ENCODE measurements at regions of chr10 and their contacts with region 1.

Region 1: GRCh38 chr10:101840741-101841453 is 2.7 kb downstream of the KCNIP2 start:
- DNase-seq: peak; percentile 69 to 85 (median 76)
- ATAC-seq: peak; percentile 95
- H3K4me3 ChIP-seq: no peak overlapping the region
- H3K27ac ChIP-seq: no peak overlapping the region
- H3K4me1 ChIP-seq: peaks cover under 1 to 21% of the 10 kb centered on the region in 2 experiments; a peak in 4 of 5 replicates
- H3K27me3 ChIP-seq: no peaks in the 10 kb centered on the region
- CTCF ChIP-seq: peak; percentile 94 to 98 (median 95)
- EP300 ChIP-seq: no peak
- POLR2A ChIP-seq: no peak
- RAD21 ChIP-seq: peak; percentile 89 to 93

Region 2: GRCh38 chr10:101725296-101726115 is 115.4 kb before region 1 on chr10:
- CTCF ChIA-PET with region 1: no interaction called
- POLR2A ChIA-PET with region 1: no interaction called
- in situ Hi-C with region 1: no loop called
- intact Hi-C with region 1: no loop called
- DNase-seq: peak in 1 of 4 experiments; percentile 9
- ATAC-seq: peak; percentile 64
- H3K4me3 ChIP-seq: no peak overlapping the region
- H3K27ac ChIP-seq: no peak overlapping the region
- H3K4me1 ChIP-seq: no peaks in the 10 kb centered on the region; a peak in 3 of 5 replicates
- H3K27me3 ChIP-seq: no peaks in the 10 kb centered on the region
- CTCF ChIP-seq: no peak
- EP300 ChIP-seq: no peak
- POLR2A ChIP-seq: no peak
- RAD21 ChIP-seq: no peak

Region 3: DNA sequence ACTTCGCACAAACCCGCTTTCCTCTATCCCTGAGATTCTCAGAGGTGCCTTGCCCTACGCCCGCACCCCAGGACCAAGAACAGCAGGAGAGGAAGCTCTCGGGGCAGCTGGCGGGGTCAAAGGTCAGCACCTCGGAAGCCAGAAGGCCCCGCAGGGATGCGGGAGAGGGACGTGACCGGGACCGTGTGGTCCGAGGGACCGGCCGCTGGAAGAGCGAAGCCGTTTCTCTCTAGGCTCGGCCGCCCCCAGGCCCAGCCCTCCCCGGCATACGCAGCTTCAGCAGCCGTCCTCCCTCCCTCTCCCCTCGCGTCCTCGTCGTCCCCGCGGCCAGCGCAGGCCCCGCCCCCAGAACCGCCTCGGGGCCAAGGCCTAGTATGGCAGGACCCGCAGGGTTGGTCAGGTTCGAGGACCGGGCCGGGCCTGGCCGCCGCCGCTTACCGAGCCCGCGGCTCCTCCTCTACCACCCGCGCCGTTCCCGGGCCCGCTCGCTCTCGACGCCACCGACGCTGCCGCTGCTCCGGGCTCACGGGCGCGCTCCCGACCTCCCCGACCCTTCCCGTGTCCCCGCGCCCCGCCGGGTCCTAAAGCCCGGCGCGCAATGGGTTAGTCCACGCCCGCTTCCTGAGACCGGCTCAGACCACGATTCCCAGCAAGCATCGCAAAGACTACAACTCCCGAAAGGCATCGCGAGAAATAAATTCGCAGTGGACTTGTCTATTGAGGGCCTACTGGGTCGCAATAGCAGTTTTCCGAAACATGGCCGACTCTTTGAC is 214.9 kb after region 1 on chr10 and contains the start of gene ARMH3:
- CTCF ChIA-PET with region 1: no interaction called
- POLR2A ChIA-PET with region 1: interaction called, 10 read pairs
- in situ Hi-C with region 1: no loop called
- intact Hi-C with region 1: loop called (anchors 5 kb)
- DNase-seq: peak; percentile 85 to 96 (median 88)
- ATAC-seq: peak; percentile 97
- H3K4me3 ChIP-seq: peak within 1 kb of the TSS; percentile 81
- H3K27ac ChIP-seq: peak within 1 kb of the TSS; percentile 88
- H3K4me1 ChIP-seq: peaks cover 10 to 26% of the 10 kb centered on the region in 2 experiments; a peak in 4 of 5 replicates
- H3K27me3 ChIP-seq: no peaks in the 10 kb centered on the region
- CTCF ChIP-seq: no peak
- EP300 ChIP-seq: peak; percentile 22; the same call in 1 of the 2 replicates
- POLR2A ChIP-seq: peak; percentile 75
- RAD21 ChIP-seq: no peak
- polyA plus RNA-seq, gene ARMH3: not detected

Region 4: GRCh38 chr10:102114861-102115618 is 274.1 kb after region 1 on chr10:
- CTCF ChIA-PET with region 1: interaction called, 3 read pairs
- POLR2A ChIA-PET with region 1: no interaction called
- in situ Hi-C with region 1: no loop called
- intact Hi-C with region 1: loop called (anchors 10 kb)
- DNase-seq: peak; percentile 67 to 92 (median 76)
- ATAC-seq: peak; percentile 83
- H3K4me3 ChIP-seq: peak overlapping the region; percentile 94
- H3K27ac ChIP-seq: peak overlapping the region; percentile 64
- H3K4me1 ChIP-seq: peaks cover 42 to 48% of the 10 kb centered on the region in 2 experiments
- H3K27me3 ChIP-seq: no peaks in the 10 kb centered on the region
- CTCF ChIP-seq: no peak
- EP300 ChIP-seq: no peak
- POLR2A ChIP-seq: peak; percentile 75
- RAD21 ChIP-seq: no peak

Region 5: GRCh38 chr10:102432162-102432950 is 591.5 kb after region 1 on chr10 and contains the start of gene CUEDC2:
- CTCF ChIA-PET with region 1: no interaction called
- POLR2A ChIA-PET with region 1: no interaction called
- in situ Hi-C with region 1: loop called (anchors 25 kb)
- intact Hi-C with region 1: no loop called
- DNase-seq: peak; percentile 78 to 97 (median 84)
- ATAC-seq: peak; percentile 85
- H3K4me3 ChIP-seq: peak within 1 kb of the TSS; percentile 55
- H3K27ac ChIP-seq: peak within 1 kb of the TSS; percentile 88
- H3K4me1 ChIP-seq: peaks cover 23 to 31% of the 10 kb centered on the region in 2 experiments
- H3K27me3 ChIP-seq: no peaks in the 10 kb centered on the region
- CTCF ChIP-seq: no peak; a peak in 1 of 6 replicates
- EP300 ChIP-seq: peak; percentile 40; the same call in 1 of the 2 replicates
- POLR2A ChIP-seq: peak; percentile 79
- RAD21 ChIP-seq: no peak
- polyA plus RNA-seq, gene CUEDC2: 8.5 to 17.0 TPM

Region 6: GRCh38 chr10:102615361-102615760 is 774.5 kb after region 1 on chr10:
- CTCF ChIA-PET with region 1: no interaction called
- POLR2A ChIA-PET with region 1: no interaction called
- in situ Hi-C with region 1: loop called (anchors 25 kb)
- intact Hi-C with region 1: no loop called
- DNase-seq: peak; percentile 63 to 70 (median 66)
- ATAC-seq: peak; percentile 96
- H3K4me3 ChIP-seq: no peak overlapping the region
- H3K27ac ChIP-seq: no peak overlapping the region; the same call in 2 of the 3 replicates
- H3K4me1 ChIP-seq: peaks cover 0 to 33% of the 10 kb centered on the region in 2 experiments; a peak in 4 of 5 replicates
- H3K27me3 ChIP-seq: no peaks in the 10 kb centered on the region
- CTCF ChIP-seq: peak; percentile 52 to 65 (median 59)
- EP300 ChIP-seq: no peak
- POLR2A ChIP-seq: no peak
- RAD21 ChIP-seq: peak in 1 of 2 experiments; percentile 56; a peak in 2 of 4 replicates

Measured in K562 (cell line).